Mammary epithelial cell (primary cell): ENCODE measurements at regions of chr6 and their contacts with region 1.

Region 1: DNA sequence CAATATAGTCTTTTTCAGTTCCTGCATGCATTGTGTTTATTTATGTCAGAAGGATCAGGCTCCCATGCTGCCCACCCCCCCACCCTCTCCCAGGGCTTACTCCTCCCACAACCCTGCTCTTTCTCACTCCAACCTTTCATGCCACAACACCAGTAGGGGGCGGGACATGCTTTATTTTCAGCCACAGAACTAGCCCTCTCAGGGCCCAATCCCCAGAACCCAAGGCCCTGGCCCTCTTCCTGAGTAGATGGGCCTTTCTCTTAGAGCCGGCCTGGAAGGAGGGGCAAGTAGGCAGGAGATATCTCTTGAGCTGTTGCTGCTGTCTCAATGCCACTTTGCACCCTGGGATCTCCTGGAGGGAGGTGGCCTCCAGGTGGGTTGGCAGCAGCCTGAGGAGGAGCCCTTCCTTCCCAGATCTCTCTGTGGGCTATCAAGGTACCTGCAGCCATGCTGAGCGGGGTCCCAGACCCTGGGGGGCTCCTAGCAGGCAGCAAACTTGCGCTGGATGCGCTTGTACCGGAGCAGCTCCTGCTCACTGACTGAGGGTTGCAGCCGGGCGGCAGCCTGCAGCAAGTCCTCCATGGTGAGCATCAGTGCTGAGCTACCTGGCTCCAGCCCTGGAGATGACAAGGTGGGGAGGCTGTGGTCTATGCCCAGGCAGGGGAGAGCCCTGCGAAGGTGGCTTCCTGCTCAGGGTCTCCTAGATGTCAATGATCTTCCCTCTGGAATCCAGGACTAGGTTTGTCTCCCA is 3.5 kb downstream of the GNMT start:
- DNase-seq: peak; percentile 37
- H3K4me3 ChIP-seq: no peak overlapping the region
- H3K27ac ChIP-seq: no peak overlapping the region
- H3K4me1 ChIP-seq: peaks cover 16% of the 10 kb centered on the region
- H3K27me3 ChIP-seq: no peaks in the 10 kb centered on the region
- CTCF ChIP-seq: peak; percentile 21 to 40

Region 2: DNA sequence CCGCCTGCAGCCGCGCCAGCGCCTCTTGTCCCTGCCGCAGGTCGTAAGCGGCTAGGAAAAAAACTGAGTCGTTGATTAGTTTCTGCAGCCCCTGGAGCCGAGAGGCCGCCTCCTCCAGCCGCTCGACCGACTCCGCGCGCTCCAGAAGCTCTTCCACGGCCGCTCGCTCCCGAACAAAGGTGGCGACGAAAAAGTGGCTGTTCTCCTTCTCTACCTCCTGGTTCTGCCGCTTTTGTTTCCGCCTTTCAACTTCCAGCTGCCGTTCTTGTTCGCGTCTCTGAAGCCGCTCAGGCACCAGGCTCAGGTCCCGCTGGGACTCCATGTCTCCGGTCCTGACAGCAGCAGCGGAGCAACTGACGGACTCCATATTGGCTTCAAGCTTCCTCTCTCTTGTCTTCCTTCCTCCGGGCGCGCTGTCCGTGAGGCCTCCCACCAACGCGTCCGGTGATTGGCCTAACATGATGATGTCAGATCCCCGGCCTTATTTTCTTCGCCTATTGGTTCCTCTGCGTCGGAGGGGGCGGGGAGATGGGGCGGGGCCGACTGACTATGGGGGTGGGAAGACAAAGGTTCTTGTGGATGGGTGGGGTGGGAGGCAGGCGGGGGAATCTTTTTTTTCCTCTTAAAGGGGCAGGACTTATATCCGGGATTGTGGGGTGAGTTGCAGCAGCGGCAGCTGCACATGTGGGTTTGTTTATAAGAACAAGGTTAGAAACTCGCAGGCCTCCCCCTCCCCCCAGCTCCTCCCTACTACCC is 218.1 kb before region 1 on chr6 and contains the start of gene TBCC:
- CTCF ChIA-PET with region 1: no interaction called
- dilution Hi-C with region 1: no loop called
- in situ Hi-C with region 1: no loop called
- intact Hi-C with region 1: no loop called
- DNase-seq: peak; percentile 98
- H3K4me3 ChIP-seq: peak within 1 kb of the TSS; percentile 79 to 96 (median 95)
- H3K27ac ChIP-seq: peak within 1 kb of the TSS; percentile 88
- H3K4me1 ChIP-seq: peaks cover 11% of the 10 kb centered on the region
- H3K27me3 ChIP-seq: no peaks in the 10 kb centered on the region
- CTCF ChIP-seq: no peak
- total RNA-seq, gene TBCC: 13.5 to 27.8 TPM

Region 3: GRCh38 chr6:42928986-42929820 is 34.8 kb before region 1 on chr6 and contains the start of gene CNPY3:
- CTCF ChIA-PET with region 1: interaction called, 6 read pairs
- dilution Hi-C with region 1: no loop called
- in situ Hi-C with region 1: no loop called
- intact Hi-C with region 1: loop called (anchors 2 kb)
- DNase-seq: peak; percentile 98
- H3K4me3 ChIP-seq: peak within 1 kb of the TSS; percentile 64 to 87 (median 78)
- H3K27ac ChIP-seq: peak within 1 kb of the TSS; percentile 72
- H3K4me1 ChIP-seq: peaks cover 14% of the 10 kb centered on the region
- H3K27me3 ChIP-seq: no peaks in the 10 kb centered on the region
- CTCF ChIP-seq: no peak
- total RNA-seq, gene CNPY3: 30.6 to 33.0 TPM

Region 4: GRCh38 chr6:43053545-43054205 is 89.6 kb after region 1 on chr6 and contains the start of gene CUL7:
- CTCF ChIA-PET with region 1: no interaction called
- dilution Hi-C with region 1: no loop called
- in situ Hi-C with region 1: no loop called
- intact Hi-C with region 1: loop called (anchors 5 kb)
- DNase-seq: peak; percentile 94
- H3K4me3 ChIP-seq: peak within 1 kb of the TSS; percentile 90 to 93 (median 92)
- H3K27ac ChIP-seq: peak within 1 kb of the TSS; percentile 74
- H3K4me1 ChIP-seq: peaks cover 26% of the 10 kb centered on the region
- H3K27me3 ChIP-seq: no peaks in the 10 kb centered on the region
- CTCF ChIP-seq: no peak
- total RNA-seq, gene CUL7: 21.5 to 31.5 TPM

Region 5: DNA sequence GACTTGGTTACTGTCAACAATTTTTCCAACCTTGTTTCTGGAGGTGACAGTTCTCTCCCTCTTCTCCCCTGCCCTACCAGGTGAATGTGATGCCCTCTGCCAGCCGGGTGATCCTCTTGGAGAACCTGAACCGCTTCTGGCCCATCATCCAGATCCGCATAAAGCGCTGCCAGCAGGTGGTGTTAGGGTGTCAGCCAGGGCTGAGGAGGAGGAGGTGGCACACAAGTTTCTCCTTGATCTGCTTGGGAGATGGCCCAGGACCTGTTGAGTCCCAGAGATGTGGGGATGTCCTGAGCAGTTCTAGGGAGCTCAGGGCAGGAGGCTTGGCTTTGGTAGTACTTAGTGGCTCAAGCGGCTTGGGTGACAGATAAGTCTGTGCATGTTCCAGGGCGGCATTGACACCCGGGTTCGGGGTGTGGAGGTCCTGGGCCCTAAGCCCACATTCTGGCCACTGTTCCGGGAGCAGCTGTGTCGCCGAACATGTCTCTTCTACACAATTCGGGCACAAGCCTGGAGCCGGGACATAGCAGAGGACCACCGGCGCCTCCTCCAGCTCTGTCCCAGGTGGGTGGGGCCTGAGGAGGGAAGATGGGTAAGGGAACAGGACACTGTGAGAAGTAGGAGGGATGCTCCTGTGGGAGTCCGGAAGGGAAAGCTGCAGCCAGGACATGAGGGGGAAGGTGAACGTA is 239.1 kb after region 1 on chr6:
- CTCF ChIA-PET with region 1: no interaction called
- dilution Hi-C with region 1: no loop called
- in situ Hi-C with region 1: no loop called
- intact Hi-C with region 1: no loop called
- DNase-seq: no peak
- H3K4me3 ChIP-seq: no peak overlapping the region
- H3K27ac ChIP-seq: no peak overlapping the region
- H3K4me1 ChIP-seq: no peaks in the 10 kb centered on the region
- H3K27me3 ChIP-seq: no peaks in the 10 kb centered on the region
- CTCF ChIP-seq: no peak